HEK293 (cell line): ENCODE measurements at regions of chr1 and their contacts with region 1.

Region 1: GRCh38 chr1:235239851-235240250 is 78.8 kb upstream of the RBM34 start:
- H3K4me3 ChIP-seq: no peak overlapping the region
- H3K27ac ChIP-seq: no peak overlapping the region
- H3K4me1 ChIP-seq: no peaks in the 10 kb centered on the region
- CTCF ChIP-seq: no peak

Region 2: GRCh38 chr1:235199441-235199840 is 40.4 kb before region 1 on chr1:
- CTCF ChIA-PET with region 1: no interaction called
- POLR2A ChIA-PET with region 1: no interaction called
- H3K4me3 ChIP-seq: no peak overlapping the region
- H3K27ac ChIP-seq: no peak overlapping the region
- H3K4me1 ChIP-seq: no peaks in the 10 kb centered on the region
- CTCF ChIP-seq: peak; percentile 51; the same call in 1 of the 2 replicates

Region 3: DNA sequence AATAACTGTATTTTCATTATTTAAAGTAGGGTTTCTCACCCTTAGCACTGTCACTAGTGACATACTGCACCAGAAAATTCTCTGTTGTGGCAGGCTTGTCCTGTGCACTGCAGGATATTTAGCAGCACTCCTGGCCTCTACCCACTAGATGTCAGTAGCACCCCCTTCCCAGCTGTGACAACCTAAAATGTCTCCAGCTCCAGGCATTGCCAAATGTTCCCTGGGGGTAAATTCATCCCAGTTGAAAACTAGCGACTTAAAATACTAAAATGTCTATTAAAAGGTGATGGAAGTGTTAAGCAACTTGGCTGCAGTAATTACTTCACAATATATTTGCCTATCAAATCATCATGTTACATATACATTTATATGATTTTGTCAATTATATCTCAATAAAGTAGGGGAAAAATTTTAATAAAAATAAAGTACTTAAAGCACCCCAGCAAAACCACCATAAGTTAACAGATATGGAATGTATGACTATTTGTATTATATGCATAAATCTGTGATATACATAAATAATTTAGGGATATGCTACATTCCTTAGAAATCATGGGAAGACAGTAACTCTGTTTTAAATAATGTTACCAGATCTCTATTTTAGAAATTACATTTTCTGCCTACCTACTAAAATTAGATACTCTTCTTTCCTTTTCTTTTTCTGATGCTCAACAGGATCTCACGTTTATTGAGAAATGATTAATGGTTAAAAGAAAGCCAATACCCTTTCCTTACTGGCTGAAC is 13.5 kb after region 1 on chr1:
- CTCF ChIA-PET with region 1: interaction called, 20 read pairs
- POLR2A ChIA-PET with region 1: interaction called, 3 read pairs
- H3K4me3 ChIP-seq: no peak overlapping the region
- H3K27ac ChIP-seq: no peak overlapping the region
- H3K4me1 ChIP-seq: no peaks in the 10 kb centered on the region
- CTCF ChIP-seq: peak; percentile 82